MCF 10A (cell line): ENCODE measurements at regions of chr4 and their contacts with region 1.

Region 1: DNA sequence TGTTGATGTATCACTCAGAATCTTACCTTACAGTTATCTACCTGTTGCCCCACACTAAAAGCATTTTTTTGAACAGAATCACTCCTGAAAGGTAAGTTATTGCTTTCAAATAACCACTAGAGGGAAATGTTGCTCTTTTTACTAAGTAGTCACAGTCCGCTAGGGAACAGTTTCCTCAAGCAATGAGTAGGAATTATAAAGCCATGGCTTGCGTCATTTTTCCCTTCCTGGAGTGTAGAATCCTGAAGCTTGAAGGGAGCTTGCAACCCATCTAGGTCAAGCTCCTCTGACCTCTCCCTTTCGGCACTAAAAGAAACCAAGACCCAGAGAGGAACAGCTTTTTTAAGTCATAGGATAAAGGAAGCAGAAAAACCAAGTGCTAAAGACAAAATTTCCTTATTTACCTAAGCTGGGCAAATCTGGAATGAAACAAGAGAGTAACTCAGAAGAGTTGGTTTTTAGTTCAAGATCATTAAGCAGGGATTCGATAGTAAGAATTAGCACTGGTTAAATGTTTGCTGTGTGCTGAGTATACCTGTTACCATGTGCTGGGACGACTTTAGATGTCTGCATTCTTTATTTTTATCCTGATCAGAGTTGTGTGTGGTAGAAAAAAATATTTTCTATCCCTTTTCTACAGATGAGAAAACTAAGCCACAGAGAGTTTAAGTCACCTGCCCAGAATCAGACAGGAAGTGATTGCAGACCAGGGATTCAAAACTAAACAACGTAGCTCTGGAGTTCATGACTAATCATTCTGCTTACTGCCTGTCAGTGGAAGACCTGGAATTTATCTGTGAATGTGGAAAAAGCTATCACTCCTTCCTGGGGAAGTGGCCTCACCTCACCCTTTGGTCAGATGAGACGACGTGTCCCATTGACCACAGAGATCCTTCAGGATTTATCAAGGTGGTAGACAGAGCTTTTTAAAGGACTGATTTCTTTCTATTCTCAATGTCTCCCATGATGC is 631.5 kb downstream of the RAB28 start:
- DNase-seq: peak; percentile 85
- H3K4me3 Mint-ChIP-seq: peak overlapping the region; percentile 16
- H3K27ac Mint-ChIP-seq: peak overlapping the region; percentile 93
- H3K4me1 Mint-ChIP-seq: peaks cover 7% of the 10 kb centered on the region
- H3K27me3 Mint-ChIP-seq: no peaks in the 10 kb centered on the region
- CTCF ChIP-seq: peak; percentile 64

Region 2: DNA sequence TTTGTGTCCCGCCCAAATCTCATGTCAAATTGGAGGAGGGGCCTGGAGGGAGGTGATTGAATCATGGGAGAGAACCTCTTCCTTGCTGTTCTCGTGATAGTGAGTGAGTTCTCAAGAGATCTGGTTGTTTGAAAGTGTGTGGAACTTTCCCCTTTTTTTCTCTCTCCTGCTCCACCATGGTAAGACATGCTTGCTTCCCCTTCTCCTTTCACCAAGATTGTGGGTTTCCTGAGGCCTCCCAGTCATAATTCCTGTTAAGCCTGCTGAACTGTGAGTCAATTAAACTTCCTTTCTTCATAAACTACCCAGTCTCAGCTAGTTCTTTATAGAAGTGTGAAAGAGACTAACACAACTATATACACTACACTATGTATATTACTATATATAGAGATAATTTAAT is 726.1 kb before region 1 on chr4:
- CTCF ChIA-PET with region 1: no interaction called
- POLR2A ChIA-PET with region 1: no interaction called
- intact Hi-C with region 1: no loop called
- DNase-seq: no peak
- H3K4me3 Mint-ChIP-seq: no peak overlapping the region
- H3K27ac Mint-ChIP-seq: no peak overlapping the region
- H3K4me1 Mint-ChIP-seq: no peaks in the 10 kb centered on the region
- H3K27me3 Mint-ChIP-seq: no peaks in the 10 kb centered on the region
- CTCF ChIP-seq: no peak

Region 3: DNA sequence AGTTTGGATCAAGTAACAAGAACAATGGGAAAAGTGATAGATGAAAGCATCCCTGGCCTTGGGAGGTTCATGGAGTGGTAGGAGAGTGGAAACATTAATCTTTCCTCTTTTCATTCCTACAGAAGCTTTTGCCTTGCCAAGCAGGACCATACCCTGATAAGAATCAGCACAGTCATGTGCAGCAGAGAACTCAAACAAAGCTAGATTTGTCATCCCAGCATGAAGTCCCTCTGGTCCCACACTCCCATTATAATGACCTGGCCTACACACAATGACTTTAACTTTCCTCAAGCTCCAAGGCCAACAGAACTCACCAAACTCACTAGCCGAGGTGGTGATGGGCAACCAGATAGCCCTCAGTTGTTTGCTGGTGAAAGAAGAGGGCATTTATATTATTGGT is 157.2 kb before region 1 on chr4:
- CTCF ChIA-PET with region 1: no interaction called
- POLR2A ChIA-PET with region 1: no interaction called
- intact Hi-C with region 1: no loop called
- DNase-seq: no peak
- H3K4me3 Mint-ChIP-seq: no peak overlapping the region
- H3K27ac Mint-ChIP-seq: no peak overlapping the region
- H3K4me1 Mint-ChIP-seq: peaks cover 8% of the 10 kb centered on the region
- H3K27me3 Mint-ChIP-seq: no peaks in the 10 kb centered on the region
- CTCF ChIP-seq: no peak

Region 4: DNA sequence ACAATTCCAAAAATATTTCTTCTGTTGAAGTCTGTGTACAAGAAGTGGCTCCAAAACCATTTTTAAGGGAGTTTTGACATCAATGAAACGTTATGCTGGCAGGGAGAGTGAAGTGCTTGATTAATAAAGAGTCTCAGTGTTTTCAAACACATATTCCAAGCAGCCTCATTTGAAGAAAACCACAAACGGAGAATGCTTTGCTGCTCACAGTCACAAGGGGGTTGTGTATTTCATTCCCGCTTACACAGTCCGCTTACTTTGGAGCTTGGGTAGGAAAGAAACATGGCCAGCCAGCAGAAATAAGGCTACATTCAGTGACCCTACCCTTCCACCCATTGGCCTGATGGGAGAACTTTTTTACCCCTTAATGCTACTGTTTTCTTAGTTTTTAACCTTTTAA is 45.3 kb after region 1 on chr4:
- CTCF ChIA-PET with region 1: no interaction called
- POLR2A ChIA-PET with region 1: no interaction called
- intact Hi-C with region 1: no loop called
- DNase-seq: no peak
- H3K4me3 Mint-ChIP-seq: no peak overlapping the region
- H3K27ac Mint-ChIP-seq: no peak overlapping the region
- H3K4me1 Mint-ChIP-seq: no peaks in the 10 kb centered on the region
- H3K27me3 Mint-ChIP-seq: no peaks in the 10 kb centered on the region
- CTCF ChIP-seq: no peak

Region 5: DNA sequence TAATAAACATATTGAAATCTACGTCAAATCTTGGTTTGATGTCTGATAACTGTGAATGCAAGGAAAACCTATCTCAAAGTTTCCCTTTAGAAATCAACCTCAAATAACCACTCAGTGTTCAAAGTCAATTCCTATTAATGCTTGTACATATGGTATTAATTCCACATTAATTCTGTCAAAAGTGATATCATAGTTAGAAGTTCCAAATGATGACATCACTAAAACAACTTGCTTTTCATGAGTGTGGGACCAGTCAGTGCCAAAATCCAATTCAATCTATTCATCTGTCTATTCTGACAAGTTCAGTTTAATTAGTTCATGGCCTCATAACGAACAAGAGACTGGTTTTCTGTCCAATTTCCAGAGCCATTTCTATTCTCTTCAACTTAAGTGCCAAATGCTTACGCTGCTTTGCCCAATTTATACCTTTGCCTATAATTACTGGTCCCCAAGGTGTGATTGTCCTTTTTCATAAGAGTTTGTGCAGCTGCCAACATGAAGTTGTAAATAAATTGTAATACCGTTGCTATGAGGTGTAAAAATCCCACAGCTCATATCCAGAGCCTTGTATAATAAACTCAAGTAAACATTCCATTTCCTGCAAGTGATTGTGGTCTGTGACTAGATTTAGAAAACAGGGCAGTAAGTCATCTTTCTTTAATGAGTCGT is 155.3 kb after region 1 on chr4:
- CTCF ChIA-PET with region 1: no interaction called
- POLR2A ChIA-PET with region 1: no interaction called
- intact Hi-C with region 1: no loop called
- DNase-seq: no peak
- H3K4me3 Mint-ChIP-seq: no peak overlapping the region
- H3K27ac Mint-ChIP-seq: no peak overlapping the region
- H3K4me1 Mint-ChIP-seq: no peaks in the 10 kb centered on the region
- H3K27me3 Mint-ChIP-seq: no peaks in the 10 kb centered on the region
- CTCF ChIP-seq: no peak

Region 6: GRCh38 chr4:13248621-13249298 is 396.1 kb after region 1 on chr4:
- CTCF ChIA-PET with region 1: no interaction called
- POLR2A ChIA-PET with region 1: no interaction called
- intact Hi-C with region 1: loop called (anchors 1 kb)
- DNase-seq: peak; percentile 20
- H3K4me3 Mint-ChIP-seq: no peak overlapping the region
- H3K27ac Mint-ChIP-seq: no peak overlapping the region
- H3K4me1 Mint-ChIP-seq: no peaks in the 10 kb centered on the region
- H3K27me3 Mint-ChIP-seq: no peaks in the 10 kb centered on the region
- CTCF ChIP-seq: peak; percentile 20

Region 7: GRCh38 chr4:13484122-13484748 is 631.6 kb after region 1 on chr4 and contains the start of gene RAB28:
- CTCF ChIA-PET with region 1: interaction called, 6 read pairs
- POLR2A ChIA-PET with region 1: no interaction called
- intact Hi-C with region 1: loop called (anchors 2 kb)
- DNase-seq: peak; percentile 93
- H3K4me3 Mint-ChIP-seq: peak within 1 kb of the TSS; percentile 80
- H3K27ac Mint-ChIP-seq: peak within 1 kb of the TSS; percentile 95
- H3K4me1 Mint-ChIP-seq: peaks cover 11% of the 10 kb centered on the region
- H3K27me3 Mint-ChIP-seq: no peaks in the 10 kb centered on the region
- CTCF ChIP-seq: no peak
- total RNA-seq, gene RAB28: 15.9 and 18.7 TPM in 2 replicates